Left ventricle myocardium inferior (tissue), 1 donor: ENCODE measurements at regions of chr2 and their contacts with region 1.

Region 1: DNA sequence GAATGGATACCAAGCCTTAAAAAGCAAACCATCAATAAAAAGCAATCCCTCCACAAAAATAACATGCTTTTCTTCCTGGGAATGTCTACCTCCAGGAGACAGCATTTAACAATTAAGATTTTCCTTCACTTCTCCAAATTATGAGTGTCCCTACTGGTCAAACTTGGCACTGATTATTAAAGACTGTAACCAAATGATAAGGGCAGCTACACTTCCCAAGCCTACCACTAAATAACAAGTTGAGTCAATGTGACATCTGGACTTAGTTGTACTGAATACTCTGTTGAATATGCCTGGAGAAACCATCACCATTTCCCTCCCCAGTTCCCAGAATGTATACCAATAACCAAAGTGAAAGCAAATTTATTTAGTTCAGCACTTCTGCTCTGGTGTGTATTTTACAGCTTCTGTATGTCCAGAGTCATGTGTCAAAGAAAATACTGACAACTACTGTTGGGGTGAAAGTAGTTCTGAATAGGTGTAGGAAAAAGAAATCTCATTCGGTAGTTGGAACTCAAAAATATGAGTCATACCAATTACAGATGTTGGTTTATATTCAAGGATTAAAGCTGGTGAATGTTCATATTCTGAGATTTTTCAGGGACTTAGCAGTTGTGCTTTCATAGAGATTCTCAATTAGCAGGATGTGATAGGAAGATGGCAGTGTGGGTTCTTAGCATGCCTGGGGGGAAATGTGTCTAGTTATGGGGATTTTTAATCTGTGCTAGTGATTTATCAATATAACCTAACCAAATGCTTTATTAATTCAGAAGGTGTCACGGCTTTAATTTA is 1291.6 kb upstream of the GYPC start:
- DNase-seq: no peak
- H3K4me3 ChIP-seq: no peak overlapping the region
- H3K27ac ChIP-seq: no peak overlapping the region
- H3K4me1 ChIP-seq: no peaks in the 10 kb centered on the region
- H3K27me3 ChIP-seq: no peaks in the 10 kb centered on the region
- CTCF ChIP-seq: no peak

Region 2: GRCh38 chr2:125634662-125635061 is 270.3 kb after region 1 on chr2:
- intact Hi-C with region 1: loop called (anchors 10 kb)
- DNase-seq: no peak
- H3K4me3 ChIP-seq: no peak overlapping the region
- H3K27ac ChIP-seq: no peak overlapping the region
- H3K4me1 ChIP-seq: no peaks in the 10 kb centered on the region
- H3K27me3 ChIP-seq: no peaks in the 10 kb centered on the region
- CTCF ChIP-seq: no peak